Activated naive CD4-positive, alpha-beta T cell treated with anti-CD3 and anti-CD28 coated beads, Interleukin-2, amount 10 ng/mL, durations not matched to agents 7 days and 5 days (primary cell): ENCODE measurements at regions of chr14 and their contacts with region 1.

Region 1: DNA sequence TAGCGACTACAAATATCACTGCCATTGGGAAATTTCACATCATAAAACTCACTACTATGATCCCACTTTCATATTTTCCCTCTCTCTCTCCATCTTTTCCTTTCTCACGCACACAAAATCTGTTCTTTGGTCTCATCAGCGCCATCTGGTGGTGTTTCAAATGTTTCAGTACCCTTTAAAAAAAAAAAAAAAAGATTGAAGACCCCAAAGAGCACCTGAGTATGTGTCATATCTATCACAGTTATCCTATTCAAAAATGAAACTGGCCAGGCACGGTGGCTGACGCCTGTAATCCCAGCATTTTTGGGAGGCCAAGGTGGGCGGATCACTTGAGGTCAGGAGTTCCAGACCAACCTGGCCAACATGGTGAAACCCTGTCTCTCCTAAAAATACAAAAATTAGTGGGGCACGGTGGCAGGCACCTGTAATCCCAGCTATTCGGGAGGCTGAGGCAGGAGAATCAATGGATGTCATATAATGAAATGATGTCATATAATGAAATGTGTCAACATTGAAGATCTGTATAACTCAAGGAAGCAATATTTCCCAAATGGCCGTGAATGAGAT is 72.4 kb downstream of the TTC9 start:
- DNase-seq: peak; percentile 56
- H3K4me3 Mint-ChIP-seq: no peak overlapping the region
- H3K27ac Mint-ChIP-seq: no peak overlapping the region
- H3K4me1 Mint-ChIP-seq: peaks cover 3% of the 10 kb centered on the region
- H3K27me3 Mint-ChIP-seq: peaks cover 11% of the 10 kb centered on the region

Region 2: DNA sequence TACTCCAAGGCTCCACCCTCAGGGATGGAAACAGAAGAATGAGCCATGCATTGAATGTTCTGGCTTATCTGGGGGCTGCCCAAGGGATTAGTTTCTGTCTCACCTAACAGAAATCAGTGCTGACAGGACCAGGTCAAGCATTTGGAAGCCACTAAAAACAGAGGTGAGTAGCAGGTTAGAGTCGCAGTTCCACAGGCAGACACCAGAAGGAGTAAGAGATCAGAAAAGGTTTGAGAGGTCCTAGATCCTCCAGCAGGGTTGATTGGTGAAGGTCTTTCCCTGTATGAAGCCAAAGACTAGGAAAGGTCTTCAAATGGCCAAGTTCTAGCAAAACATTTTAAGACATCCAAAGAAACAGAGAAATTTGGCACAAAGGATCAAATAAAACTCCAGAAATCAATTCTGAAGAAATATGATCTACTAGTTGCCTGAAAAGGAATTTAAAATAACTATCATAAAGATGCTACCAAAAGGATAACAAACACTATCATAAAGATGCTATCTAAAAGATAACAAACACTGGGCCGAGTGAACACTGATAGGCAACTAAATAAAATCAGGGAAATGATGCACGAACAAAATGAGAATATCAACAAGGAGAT is 91.9 kb before region 1 on chr14:
- CTCF ChIA-PET with region 1: interaction called, 87 read pairs
- DNase-seq: peak; percentile 71
- H3K4me3 Mint-ChIP-seq: no peak overlapping the region
- H3K27ac Mint-ChIP-seq: no peak overlapping the region
- H3K4me1 Mint-ChIP-seq: no peaks in the 10 kb centered on the region
- H3K27me3 Mint-ChIP-seq: peaks cover 6% of the 10 kb centered on the region

Region 3: DNA sequence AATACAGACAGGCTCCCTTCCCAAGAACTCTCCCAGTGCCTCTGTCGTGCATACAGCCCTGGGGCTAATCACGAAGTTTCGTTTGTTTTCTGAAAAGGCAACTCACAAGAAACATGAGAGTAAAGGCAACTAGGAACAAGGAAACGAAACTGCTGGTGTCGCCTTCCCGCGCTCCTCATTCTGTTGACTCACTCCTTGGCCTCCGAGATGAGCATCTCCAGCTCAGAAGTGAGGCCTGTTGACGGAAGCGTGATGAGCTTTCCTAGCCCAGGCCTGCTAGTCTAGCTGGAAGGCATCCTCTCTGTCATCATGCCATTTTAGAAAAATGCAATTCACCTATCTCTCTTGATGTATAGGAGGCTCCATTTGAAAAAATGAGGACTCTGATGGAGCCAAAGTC is 21.9 kb before region 1 on chr14:
- CTCF ChIA-PET with region 1: no interaction called
- DNase-seq: no peak
- H3K4me3 Mint-ChIP-seq: no peak overlapping the region
- H3K27ac Mint-ChIP-seq: no peak overlapping the region
- H3K4me1 Mint-ChIP-seq: no peaks in the 10 kb centered on the region
- H3K27me3 Mint-ChIP-seq: no peaks in the 10 kb centered on the region